Common myeloid progenitor, CD34-positive (primary cell): ENCODE measurements at regions of chr2 and their contacts with region 1.

Region 1: DNA sequence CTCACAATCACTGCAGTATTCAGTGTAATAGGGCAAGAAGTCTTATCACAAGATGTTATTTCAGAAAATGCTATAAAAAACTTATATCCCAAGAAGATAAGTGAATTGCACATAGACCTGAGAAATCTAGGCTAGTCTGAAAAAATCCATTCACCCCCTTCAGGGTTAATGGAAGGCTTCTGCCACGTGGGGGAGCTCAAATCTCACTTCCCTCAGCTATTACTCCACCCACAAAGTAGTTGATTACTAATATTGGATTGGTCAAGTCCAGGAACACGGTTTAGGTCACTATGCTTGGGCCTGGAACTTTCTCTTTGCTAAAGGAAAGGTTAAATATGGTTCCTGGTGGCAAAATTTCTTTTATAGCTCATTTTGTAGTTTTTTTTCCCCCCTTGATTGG is 51.2 kb upstream of the ADAM23 start:
- DNase-seq: peak; percentile 22 to 40 (median 32)
- H3K4me3 ChIP-seq: no peak overlapping the region
- H3K27ac ChIP-seq: no peak overlapping the region
- H3K4me1 ChIP-seq: no peaks in the 10 kb centered on the region
- H3K27me3 ChIP-seq: no peaks in the 10 kb centered on the region

Region 2: GRCh38 chr2:206406428-206406827 is 14.3 kb after region 1 on chr2:
- CTCF ChIA-PET with region 1: no interaction called
- POLR2A ChIA-PET with region 1: no interaction called
- DNase-seq: no peak
- H3K4me3 ChIP-seq: no peak overlapping the region
- H3K27ac ChIP-seq: no peak overlapping the region
- H3K4me1 ChIP-seq: no peaks in the 10 kb centered on the region
- H3K27me3 ChIP-seq: peaks cover 0 to 2% (median 0%) of the 10 kb centered on the region in 5 experiments

Region 3: GRCh38 chr2:206540757-206541156 is 148.6 kb after region 1 on chr2:
- CTCF ChIA-PET with region 1: no interaction called
- POLR2A ChIA-PET with region 1: no interaction called
- DNase-seq: no peak
- H3K4me3 ChIP-seq: no peak overlapping the region
- H3K27ac ChIP-seq: no peak overlapping the region
- H3K4me1 ChIP-seq: no peaks in the 10 kb centered on the region
- H3K27me3 ChIP-seq: no peaks in the 10 kb centered on the region

Region 4: DNA sequence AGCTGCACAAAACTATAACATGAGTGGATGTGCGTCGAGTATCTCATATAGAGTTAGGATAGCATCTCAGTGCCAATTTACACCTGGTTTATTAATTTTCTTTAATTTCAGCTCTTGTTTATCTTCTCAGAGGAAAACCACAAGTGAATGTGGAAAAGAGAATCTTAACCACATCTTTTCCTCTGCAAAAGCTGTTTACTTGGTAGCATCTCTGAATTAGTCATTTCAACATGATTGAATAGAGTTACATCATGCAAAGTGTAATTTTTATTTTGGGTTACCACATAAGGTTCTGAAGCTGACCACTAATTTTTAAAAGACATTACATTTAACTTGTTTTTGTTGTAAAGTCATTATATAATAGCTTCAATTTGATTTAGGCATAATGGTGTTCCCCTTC is 166.4 kb after region 1 on chr2:
- CTCF ChIA-PET with region 1: interaction called, 12 read pairs
- POLR2A ChIA-PET with region 1: no interaction called
- DNase-seq: peak in 2 of 3 donors; percentile 38 to 45
- H3K4me3 ChIP-seq: no peak overlapping the region
- H3K27ac ChIP-seq: no peak overlapping the region
- H3K4me1 ChIP-seq: peaks cover 0 to 6% (median 0%) of the 10 kb centered on the region in 4 experiments
- H3K27me3 ChIP-seq: peaks cover 0 to 4% (median 0%) of the 10 kb centered on the region in 5 experiments